ENCODE measurements at regions of chr4 and their contacts with region 1.

Region 1: DNA sequence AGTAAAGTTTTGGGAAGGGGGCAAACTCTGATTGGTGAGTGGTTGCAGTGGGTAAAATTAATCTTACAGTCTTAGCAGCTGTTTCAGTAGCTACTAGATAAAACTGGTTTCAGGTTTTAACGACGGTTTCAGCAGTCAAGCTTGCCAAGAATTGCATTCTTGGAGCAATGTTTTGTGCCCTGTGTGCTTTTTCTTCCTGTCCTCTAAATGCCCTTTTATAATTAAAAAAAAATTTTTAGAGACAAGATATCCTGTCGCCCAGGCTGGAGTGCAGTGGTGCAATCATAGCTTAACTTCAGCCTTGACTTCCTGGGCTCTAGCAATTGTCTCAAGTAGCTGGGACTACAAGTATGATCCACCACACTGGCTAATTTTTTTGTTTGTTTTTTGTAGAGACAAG is 6.3 kb upstream of the PPEF2 start:
- DNase-seq: no peak
- H3K4me3 Mint-ChIP-seq: no peak overlapping the region
- H3K27ac Mint-ChIP-seq: peak overlapping the region; percentile 57
- H3K4me1 Mint-ChIP-seq: no peaks in the 10 kb centered on the region
- H3K27me3 Mint-ChIP-seq: no peaks in the 10 kb centered on the region

Region 2: DNA sequence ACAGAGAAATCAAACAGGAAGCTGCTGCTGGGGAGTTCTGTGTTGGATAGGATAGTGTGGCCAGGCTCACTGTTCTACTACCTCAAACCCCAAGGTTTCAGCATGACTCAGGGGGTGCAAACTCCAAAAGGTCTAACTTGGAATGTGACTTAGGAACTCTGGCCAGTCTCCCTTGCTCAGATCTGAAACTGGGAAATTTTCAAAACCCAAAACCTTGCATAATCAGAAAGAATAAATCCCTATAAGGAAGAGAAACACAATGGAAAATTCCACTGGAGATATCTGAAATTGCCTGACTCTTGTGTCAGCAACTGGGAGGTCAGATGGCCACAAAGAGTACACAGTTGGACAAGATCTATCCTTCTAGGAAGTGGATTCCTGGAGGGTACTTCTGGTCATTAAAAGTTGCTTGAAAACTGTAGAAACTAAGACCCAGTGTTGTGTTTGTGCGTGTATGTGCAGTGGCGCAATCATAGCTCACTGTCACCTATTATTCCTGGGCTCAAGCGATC is 64.3 kb before region 1 on chr4:
- CTCF ChIA-PET with region 1: no interaction called
- DNase-seq: no peak
- H3K4me3 Mint-ChIP-seq: no peak overlapping the region
- H3K27ac Mint-ChIP-seq: no peak overlapping the region
- H3K4me1 Mint-ChIP-seq: no peaks in the 10 kb centered on the region
- H3K27me3 Mint-ChIP-seq: peaks cover 3% of the 10 kb centered on the region

Region 3: GRCh38 chr4:75889201-75890199 is 19.1 kb before region 1 on chr4:
- CTCF ChIA-PET with region 1: interaction called, 43 read pairs
- DNase-seq: no peak
- H3K4me3 Mint-ChIP-seq: no peak overlapping the region
- H3K27ac Mint-ChIP-seq: no peak overlapping the region
- H3K4me1 Mint-ChIP-seq: no peaks in the 10 kb centered on the region
- H3K27me3 Mint-ChIP-seq: peaks cover 11% of the 10 kb centered on the region

Region 4: DNA sequence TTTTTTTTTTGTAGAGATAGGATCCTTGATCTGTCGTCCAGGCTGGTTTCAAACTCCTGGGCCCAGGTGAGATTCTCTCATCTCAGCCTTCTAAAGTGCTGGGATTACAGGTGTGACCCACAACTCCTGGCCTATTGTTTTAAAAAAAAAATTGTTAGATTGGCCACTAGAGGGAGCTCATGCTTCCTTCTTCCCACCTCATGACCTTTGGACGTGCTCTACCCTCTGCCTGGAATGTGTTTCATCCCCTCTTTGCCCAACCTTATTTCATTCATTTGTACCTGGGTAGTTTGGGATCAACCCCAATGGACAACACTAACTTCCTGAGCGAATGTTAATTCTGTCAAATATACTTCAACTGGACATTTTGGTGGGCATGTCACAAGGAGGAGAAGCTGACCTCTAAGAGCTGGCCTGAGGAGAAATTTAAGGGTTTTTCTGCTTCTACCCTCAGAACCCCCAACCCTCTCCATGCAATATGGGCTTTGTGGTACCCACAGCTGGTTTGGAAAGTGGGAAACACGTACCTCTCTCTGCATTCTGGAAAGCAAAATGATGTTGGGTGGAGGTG is 12.7 kb before region 1 on chr4:
- CTCF ChIA-PET with region 1: interaction called, 43 read pairs
- DNase-seq: no peak
- H3K4me3 Mint-ChIP-seq: no peak overlapping the region
- H3K27ac Mint-ChIP-seq: no peak overlapping the region
- H3K4me1 Mint-ChIP-seq: no peaks in the 10 kb centered on the region
- H3K27me3 Mint-ChIP-seq: no peaks in the 10 kb centered on the region

Measured in activated naive CD4-positive, alpha-beta T cell treated with anti-CD3 and anti-CD28 coated beads, Interleukin-2, amount 10 ng/mL, durations not matched to agents 7 days and 5 days (primary cell).